ENCODE measurements at regions of chr15 and their contacts with region 1.

Region 1: DNA sequence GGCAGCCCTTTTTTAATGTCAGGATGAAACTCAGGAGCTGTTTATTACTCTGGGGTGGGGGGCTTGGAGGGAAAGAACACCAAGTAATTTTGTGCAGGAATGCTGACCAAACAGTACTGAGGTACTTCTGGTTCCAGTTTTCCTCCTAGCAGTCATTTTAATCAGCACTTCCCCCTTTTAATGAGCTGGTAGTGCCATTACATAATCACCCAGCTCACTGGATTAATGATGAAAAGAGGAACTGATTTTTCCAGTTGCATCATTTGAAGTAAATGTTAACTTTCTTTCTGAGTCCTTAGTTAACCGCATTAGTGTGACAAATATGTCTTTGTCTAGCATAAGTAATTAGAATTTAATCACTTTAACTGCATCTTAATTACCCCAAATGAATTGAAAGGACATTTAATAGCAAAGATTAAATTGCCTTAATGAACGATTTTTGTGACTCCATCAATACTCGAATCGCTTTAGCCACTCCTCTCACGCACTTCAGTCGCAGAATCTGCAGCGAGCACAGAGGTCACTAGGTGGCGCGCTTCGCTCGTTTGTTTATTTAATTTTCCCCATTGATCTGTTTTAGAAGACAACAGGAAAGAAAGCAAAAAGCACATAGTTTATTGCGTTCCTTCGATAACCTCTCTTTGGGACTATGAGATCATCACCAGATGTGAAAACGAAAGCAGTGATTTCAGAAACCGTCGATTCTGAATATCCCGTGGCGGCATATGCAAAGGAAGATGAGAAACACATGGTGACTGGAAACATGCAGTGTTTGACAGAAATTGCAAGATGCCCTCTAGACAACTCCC is 9.8 kb downstream of the ONECUT1 start:
- DNase-seq: no peak
- ATAC-seq: peak in 1 of 2 donors; percentile 48
- H3K4me3 ChIP-seq: peak overlapping the region in 1 of 4 donors; percentile 40
- H3K27ac ChIP-seq: no peak overlapping the region
- H3K4me1 ChIP-seq: peaks cover 4 to 15% of the 10 kb centered on the region in 2 donors
- H3K27me3 ChIP-seq: peaks cover 67 to 85% (median 78%) of the 10 kb centered on the region in 3 donors
- CTCF ChIP-seq: peak; percentile 37 to 88 (median 69)
- POLR2A ChIP-seq: no peak

Region 2: DNA sequence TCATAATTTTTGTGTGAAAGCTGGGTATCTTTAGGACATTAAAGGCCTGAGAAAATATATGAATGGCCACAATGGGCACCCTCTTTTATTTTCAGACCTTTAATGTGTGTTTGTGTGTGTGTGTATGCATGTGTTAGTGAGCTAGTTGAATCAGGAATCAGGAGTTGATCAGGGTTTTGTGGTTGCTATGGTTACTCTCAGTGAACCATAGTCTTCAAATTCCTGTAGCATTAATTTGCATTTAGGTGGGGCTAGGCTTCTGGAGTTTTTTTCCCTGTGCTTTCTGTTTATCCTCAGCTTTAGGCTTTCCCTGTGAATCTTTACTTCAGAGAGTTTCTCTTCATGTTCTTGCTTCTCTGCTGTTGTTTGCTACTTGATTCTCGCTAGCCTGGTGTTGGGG is 131.8 kb after region 1 on chr15:
- in situ Hi-C with region 1: no loop called
- intact Hi-C with region 1: no loop called
- DNase-seq: no peak
- ATAC-seq: no peak
- H3K4me3 ChIP-seq: no peak overlapping the region
- H3K27ac ChIP-seq: no peak overlapping the region
- H3K4me1 ChIP-seq: no peaks in the 10 kb centered on the region
- H3K27me3 ChIP-seq: no peaks in the 10 kb centered on the region
- CTCF ChIP-seq: no peak
- POLR2A ChIP-seq: no peak

Region 3: GRCh38 chr15:53197426-53197839 is 417.1 kb after region 1 on chr15:
- in situ Hi-C with region 1: no loop called
- intact Hi-C with region 1: loop called (anchors 2 kb)
- DNase-seq: peak; percentile 3 to 27
- ATAC-seq: peak in 1 of 2 donors; percentile 58
- H3K4me3 ChIP-seq: peak overlapping the region; percentile 18 to 36 (median 26)
- H3K27ac ChIP-seq: no peak overlapping the region
- H3K4me1 ChIP-seq: no peaks in the 10 kb centered on the region
- H3K27me3 ChIP-seq: no peaks in the 10 kb centered on the region
- CTCF ChIP-seq: peak; percentile 55 to 87 (median 69)
- POLR2A ChIP-seq: no peak

Region 4: DNA sequence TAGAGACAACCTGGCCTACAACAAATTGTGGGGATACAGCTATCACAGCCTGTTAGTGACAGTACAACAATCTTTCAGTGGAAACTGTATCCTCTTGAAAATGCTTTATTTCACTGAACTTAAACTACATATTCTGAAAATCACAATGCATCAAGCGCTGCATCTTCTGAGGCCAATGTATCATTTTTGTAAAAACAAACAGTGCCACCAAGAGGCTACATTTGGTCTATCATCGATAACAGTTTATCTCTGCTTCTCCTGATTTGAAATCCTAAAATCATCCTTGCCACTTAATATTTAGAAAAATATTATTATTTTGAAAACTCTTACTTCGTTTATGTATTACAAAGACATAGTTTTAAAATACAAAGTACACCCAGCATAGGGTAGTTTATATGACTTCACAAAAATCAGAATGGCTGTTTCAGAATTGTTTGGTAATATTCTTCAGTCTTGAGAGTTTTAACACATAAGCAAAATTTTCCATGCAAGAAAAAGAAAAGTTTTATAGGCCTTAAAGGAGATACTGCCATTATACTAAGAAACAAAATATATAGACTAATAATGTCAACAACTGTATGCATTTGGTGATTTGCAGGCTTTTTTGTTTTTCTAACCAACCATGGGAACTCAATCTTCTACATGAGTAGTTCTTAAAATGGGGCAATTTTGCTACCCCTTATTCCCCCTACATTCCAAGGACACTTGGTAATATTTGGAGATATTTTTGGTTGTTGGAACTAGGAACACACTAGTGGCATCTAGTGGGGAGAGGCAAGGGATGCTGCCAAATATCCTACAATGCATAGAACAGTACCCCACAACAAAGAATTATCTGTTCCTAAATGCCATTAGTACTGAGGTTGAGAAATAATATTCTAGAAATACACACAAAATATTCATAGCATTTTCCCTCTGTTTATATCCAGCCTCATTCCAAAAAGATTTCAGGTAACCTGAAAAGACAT is 936.8 kb after region 1 on chr15:
- in situ Hi-C with region 1: loop called in 2 of 4 experiments (anchors 25 kb)
- intact Hi-C with region 1: loop called (anchors 5 kb)
- DNase-seq: no peak
- ATAC-seq: no peak
- H3K4me3 ChIP-seq: no peak overlapping the region
- H3K27ac ChIP-seq: no peak overlapping the region
- H3K4me1 ChIP-seq: no peaks in the 10 kb centered on the region
- H3K27me3 ChIP-seq: no peaks in the 10 kb centered on the region
- CTCF ChIP-seq: no peak
- POLR2A ChIP-seq: no peak